Activated T-helper 1 cell treated with anti-CD3 and anti-CD28 coated beads, Interleukin-12 subunit alpha, Interleukin-12 subunit beta, Interleukin-2, Interleukin-4 antibody, amounts not matched to agents 30 ng/mL and 10 ng/mL and 1 ng/mL, durations not matched to agents 14 hours and 24 hours and 36 hours (primary cell): ENCODE measurements at regions of chr1 and their contacts with region 1.

Region 1: DNA sequence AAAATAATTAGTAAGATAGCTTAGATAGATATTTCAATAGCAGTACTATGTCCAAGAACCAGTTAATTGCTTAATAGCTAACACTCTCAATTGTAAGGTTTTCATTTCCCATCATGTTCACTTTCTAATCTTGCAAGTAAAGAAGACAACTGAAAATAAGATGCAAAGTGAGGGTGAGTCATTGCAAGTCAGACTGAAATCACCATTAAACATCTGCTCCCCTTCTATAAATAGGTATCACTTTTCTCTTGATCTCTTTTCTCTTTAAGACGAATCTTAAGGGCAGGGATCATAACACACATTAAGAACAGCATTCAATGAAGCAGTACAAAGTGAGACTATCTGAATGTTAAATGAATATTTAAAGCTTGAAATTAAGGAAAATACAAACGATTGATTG is 40.4 kb downstream of the UBR4 start:
- DNase-seq: no peak
- H3K4me3 Mint-ChIP-seq: no peak overlapping the region
- H3K27ac Mint-ChIP-seq: peak overlapping the region; percentile 61
- H3K4me1 Mint-ChIP-seq: peaks cover 16% of the 10 kb centered on the region
- H3K27me3 Mint-ChIP-seq: no peaks in the 10 kb centered on the region

Region 2: GRCh38 chr1:19044975-19045831 is 124.4 kb before region 1 on chr1:
- intact Hi-C with region 1: no loop called
- DNase-seq: no peak
- H3K4me3 Mint-ChIP-seq: no peak overlapping the region
- H3K27ac Mint-ChIP-seq: no peak overlapping the region
- H3K4me1 Mint-ChIP-seq: no peaks in the 10 kb centered on the region
- H3K27me3 Mint-ChIP-seq: peaks cover 10% of the 10 kb centered on the region

Region 3: DNA sequence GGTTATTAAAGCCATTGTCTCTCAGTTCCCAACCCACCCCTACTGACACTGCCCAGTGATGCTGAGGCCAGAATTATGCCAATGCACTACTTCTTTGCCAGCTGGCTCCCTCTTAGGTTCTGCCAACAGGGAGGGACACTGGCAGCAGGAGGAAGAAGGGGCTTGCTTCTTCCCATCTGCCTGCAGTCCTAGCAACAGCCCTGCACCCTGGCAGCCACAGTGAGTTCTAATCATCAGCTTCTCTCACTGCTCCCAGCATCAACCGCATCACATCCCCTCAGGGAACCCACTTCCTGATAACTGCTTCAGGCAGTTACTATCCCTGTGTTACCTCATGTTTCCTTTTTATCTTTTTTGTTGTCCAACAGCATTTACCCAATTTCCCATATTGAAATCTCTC is 45.8 kb before region 1 on chr1:
- intact Hi-C with region 1: loop called (anchors 5 kb)
- DNase-seq: no peak
- H3K4me3 Mint-ChIP-seq: peak overlapping the region; percentile 35
- H3K27ac Mint-ChIP-seq: peak overlapping the region; percentile 56
- H3K4me1 Mint-ChIP-seq: peaks cover 29% of the 10 kb centered on the region
- H3K27me3 Mint-ChIP-seq: no peaks in the 10 kb centered on the region

Region 4: GRCh38 chr1:19139711-19140110 is 29.9 kb before region 1 on chr1:
- intact Hi-C with region 1: no loop called
- DNase-seq: no peak
- H3K4me3 Mint-ChIP-seq: no peak overlapping the region
- H3K27ac Mint-ChIP-seq: no peak overlapping the region
- H3K4me1 Mint-ChIP-seq: no peaks in the 10 kb centered on the region
- H3K27me3 Mint-ChIP-seq: no peaks in the 10 kb centered on the region

Region 5: GRCh38 chr1:19179597-19180264 is 10.1 kb after region 1 on chr1:
- intact Hi-C with region 1: loop called (anchors 1 kb)
- DNase-seq: no peak
- H3K4me3 Mint-ChIP-seq: no peak overlapping the region
- H3K27ac Mint-ChIP-seq: peak overlapping the region; percentile 88
- H3K4me1 Mint-ChIP-seq: peaks cover 24% of the 10 kb centered on the region
- H3K27me3 Mint-ChIP-seq: no peaks in the 10 kb centered on the region

Region 6: GRCh38 chr1:19186001-19186400 is 16.4 kb after region 1 on chr1:
- intact Hi-C with region 1: loop called (anchors 2 kb)
- DNase-seq: no peak
- H3K4me3 Mint-ChIP-seq: peak overlapping the region; percentile 46
- H3K27ac Mint-ChIP-seq: peak overlapping the region; percentile 89
- H3K4me1 Mint-ChIP-seq: peaks cover 18% of the 10 kb centered on the region
- H3K27me3 Mint-ChIP-seq: no peaks in the 10 kb centered on the region

Region 7: DNA sequence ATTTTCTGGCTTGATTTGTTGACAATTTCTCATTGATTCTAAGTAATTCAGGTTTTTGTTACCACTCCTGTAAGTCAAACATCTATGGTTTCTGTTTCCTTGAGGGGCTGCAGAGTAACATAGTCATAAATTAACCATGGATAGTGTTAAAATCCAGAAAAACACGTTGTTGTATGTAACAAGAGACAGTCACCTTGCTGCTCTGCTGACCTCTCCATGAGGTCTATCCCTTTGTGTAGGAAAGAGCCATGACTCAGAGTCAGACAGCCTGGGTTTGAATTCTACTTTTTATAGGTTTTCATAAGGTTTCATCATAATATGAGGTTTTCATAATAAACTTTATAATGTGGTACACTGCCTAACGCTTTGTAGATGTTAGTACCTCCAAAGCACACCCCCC is 446.8 kb after region 1 on chr1:
- intact Hi-C with region 1: no loop called
- DNase-seq: no peak
- H3K4me3 Mint-ChIP-seq: no peak overlapping the region
- H3K27ac Mint-ChIP-seq: no peak overlapping the region
- H3K4me1 Mint-ChIP-seq: peaks cover 16% of the 10 kb centered on the region
- H3K27me3 Mint-ChIP-seq: no peaks in the 10 kb centered on the region